ENCODE measurements at regions of chr17 and their contacts with region 1.

Region 1: DNA sequence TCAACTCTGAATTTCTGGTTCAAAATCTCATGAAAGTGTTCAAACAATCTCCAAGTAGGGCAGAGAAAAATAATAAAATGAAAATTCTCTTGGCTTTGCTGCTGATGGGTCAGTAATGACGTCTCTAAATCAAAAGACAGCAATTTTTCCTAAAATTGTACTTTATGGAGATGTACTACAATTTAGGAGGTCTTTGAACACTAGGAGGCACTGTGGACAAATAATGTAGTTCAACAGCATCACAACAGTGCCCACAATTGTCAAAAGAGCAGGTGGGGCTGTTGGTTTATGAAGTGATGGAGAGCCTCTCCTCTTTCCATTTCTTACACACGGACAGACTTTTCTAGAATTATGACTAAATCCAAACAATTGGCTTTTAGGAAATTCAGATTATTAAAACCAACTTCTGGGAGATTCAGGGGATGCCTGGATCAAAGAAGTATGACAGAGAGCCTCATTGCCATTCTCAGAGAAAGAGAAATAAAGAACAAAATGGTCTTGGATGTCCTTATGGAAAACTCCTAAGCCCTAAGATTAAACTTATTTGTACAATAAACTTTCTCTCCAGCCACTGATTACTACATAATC is 23.8 kb downstream of the EZH1 start:
- DNase-seq: peak in 1 of 2 donors; percentile 72
- ATAC-seq: peak in 7 of 8 donors; percentile 76 to 91 (median 85)
- H3K4me3 ChIP-seq: no peak overlapping the region
- H3K27ac ChIP-seq: peak overlapping the region in 2 of 10 donors; percentile 3 to 41
- H3K4me1 ChIP-seq: peaks cover 0 to 6% (median 0%) of the 10 kb centered on the region in 9 donors
- H3K27me3 ChIP-seq: no peaks in the 10 kb centered on the region
- CTCF ChIP-seq: peak; percentile 33 to 84 (median 71)

Region 2: DNA sequence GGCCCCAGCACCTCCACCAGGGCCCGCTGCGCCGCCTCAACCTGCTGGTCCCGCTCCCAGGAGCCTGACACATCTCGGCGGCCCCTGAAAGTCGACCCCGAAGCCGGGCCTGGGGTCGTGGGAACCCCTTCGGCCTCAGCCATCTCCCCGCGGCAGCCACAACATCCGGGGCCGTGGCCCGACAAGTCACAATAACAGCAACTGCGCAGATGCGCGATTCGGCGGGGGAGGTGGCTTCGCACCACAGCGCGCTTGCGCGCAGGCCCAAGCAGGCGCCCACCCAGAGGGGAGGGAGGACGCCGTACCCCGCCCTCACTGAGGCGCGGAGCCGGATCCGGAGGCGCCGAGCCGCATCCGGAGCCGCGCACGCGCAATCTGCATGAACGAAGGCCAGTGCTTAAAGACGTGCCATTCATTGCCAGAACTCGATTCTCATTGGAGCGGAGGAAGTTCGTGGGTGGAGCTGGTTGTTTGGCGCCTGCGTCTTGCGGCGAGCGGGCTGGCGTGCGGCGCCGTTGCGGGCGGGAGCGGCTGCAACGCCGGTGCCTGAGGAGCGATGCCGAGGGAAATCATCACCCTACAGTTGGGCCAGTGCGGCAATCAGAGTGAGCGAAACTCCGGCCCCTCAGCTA is 111.8 kb before region 1 on chr17 and contains the starts of genes RETREG3 and TUBG1:
- intact Hi-C with region 1: no loop called
- DNase-seq: peak; percentile 98 to 99
- ATAC-seq: peak; percentile 96 to 99 (median 98)
- H3K4me3 ChIP-seq: peak within 1 kb of the TSS; percentile 60 to 97 (median 80)
- H3K27ac ChIP-seq: peak within 1 kb of the TSS; percentile 65 to 96 (median 91)
- H3K4me1 ChIP-seq: peaks cover 6 to 54% (median 44%) of the 10 kb centered on the region in 9 donors
- H3K27me3 ChIP-seq: no peaks in the 10 kb centered on the region
- CTCF ChIP-seq: peak in 7 of 9 donors; percentile 21 to 67 (median 35)
- total RNA-seq, gene RETREG3: 18.5 to 29.9 (median 25.2) TPM
- total RNA-seq, gene TUBG1: 28.2 to 59.8 (median 43.7) TPM

Region 3: DNA sequence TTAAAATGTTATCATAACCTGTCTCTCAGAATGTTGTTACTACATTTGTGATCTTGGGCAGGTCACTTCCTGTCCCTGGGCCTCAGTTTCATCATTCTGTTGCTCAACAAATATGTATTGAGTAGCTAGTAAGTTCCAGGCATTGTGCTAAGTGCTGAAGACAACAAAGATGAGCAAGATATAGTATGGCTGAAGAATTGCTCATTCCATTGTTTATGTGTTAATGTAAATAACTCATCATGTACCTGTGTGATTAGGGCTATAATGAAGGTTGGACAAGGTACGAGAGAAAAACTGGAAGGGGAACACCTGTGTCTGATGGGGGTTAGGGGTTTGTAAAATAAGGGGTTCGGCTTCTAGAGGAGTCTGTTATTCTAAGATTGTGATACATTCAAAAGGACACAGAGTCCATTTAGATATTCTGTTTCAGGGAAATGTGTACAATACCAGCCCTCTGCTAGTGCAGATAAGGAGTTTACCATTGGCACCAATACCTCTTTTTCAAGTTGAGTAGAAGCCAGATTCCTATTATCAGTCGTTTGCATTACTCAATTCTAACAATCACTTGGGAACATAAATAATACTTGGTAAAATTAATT is 91.6 kb before region 1 on chr17:
- intact Hi-C with region 1: no loop called
- DNase-seq: no peak
- ATAC-seq: no peak
- H3K4me3 ChIP-seq: no peak overlapping the region
- H3K27ac ChIP-seq: no peak overlapping the region
- H3K4me1 ChIP-seq: no peaks in the 10 kb centered on the region
- H3K27me3 ChIP-seq: no peaks in the 10 kb centered on the region
- CTCF ChIP-seq: no peak

Region 4: DNA sequence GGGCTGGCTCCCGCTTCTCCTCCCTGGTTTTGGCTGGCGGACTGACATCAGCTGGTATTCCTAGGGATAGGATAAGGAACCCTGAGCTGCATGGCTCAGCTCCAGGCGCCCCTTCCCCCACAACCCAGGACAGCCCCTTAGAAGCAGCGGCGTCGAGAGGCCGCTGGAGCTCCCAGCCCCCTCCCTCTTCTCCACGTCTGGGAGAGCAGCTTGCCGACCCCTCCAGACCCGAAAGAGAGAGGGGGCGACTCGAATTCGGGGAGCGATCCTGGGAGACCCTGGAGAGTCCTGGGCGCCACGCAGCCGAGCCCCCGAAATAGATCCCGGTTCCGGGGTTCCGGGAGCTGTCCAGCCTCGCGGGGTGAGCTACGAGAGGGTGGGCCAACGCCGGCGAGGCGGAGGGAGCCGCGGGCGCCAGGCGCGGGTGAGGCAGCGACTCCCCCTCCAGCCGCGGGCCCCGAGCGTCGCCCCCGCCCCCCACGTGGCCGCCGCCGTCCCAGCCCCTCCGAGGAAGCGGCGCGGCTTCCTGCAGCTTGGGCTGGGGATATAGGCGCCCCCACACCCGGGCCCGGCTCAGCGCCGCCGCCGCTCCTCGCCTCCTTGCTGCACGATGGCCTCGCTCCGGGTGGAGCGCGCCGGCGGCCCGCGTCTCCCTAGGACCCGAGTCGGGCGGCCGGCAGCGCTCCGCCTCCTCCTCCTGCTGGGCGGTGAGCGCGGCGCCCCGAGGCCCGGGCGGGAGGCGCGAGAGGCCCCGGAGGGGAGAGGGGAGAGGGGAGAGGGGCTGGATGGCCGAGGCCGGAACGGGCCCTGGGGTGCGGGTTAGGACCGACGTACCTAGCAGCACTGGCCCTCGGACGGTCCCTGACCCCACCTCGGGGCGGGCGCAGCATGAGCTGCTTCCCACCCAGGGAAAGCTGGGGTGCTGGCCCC is 39.8 kb after region 1 on chr17 and contains the start of gene RAMP2:
- intact Hi-C with region 1: loop called (anchors 1 to 10 kb)
- DNase-seq: peak; percentile 42 to 55
- ATAC-seq: peak; percentile 28 to 70 (median 55)
- H3K4me3 ChIP-seq: peak within 1 kb of the TSS; percentile 43 to 87 (median 70)
- H3K27ac ChIP-seq: peak within 1 kb of the TSS; percentile 81 to 97 (median 93)
- H3K4me1 ChIP-seq: peaks cover 5 to 57% (median 26%) of the 10 kb centered on the region in 9 donors
- H3K27me3 ChIP-seq: peaks cover 0 to 38% (median 7%) of the 10 kb centered on the region in 7 donors
- CTCF ChIP-seq: peak in 2 of 9 donors; percentile 7 to 8
- total RNA-seq, gene RAMP2: 32.1 to 54.8 (median 38.2) TPM

Region 5: DNA sequence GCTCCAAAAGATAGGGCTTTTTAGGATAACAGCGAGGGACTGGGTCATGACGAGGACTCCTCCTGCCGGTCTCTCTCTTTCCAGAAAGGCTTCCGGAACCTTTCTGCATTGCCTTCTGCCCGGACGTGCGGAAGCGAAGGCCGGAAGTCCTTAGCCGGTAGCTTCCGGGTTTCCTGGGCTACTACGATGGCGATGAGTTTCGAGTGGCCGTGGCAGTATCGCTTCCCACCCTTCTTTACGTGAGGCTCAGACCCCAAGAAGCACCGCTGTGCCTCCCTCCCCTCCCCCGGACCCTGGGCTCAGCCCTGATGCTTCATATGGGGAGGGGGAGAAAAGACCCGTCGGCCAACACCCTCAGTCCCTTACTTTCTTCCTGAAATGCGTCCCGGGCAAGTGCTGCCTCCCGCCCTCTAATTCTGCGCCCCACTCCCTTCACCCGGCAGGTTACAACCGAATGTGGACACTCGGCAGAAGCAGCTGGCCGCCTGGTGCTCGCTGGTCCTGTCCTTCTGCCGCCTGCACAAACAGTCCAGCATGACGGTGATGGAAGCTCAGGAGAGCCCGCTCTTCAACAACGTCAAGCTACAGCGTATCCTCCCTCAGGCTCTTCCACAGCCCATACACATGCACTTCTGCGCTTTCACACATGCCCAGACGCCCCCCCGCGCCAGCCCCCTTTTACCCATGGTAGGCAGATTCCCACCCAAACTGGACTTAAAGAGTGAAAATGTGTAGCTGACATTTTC is 52.4 kb after region 1 on chr17 and contains the start of gene VPS25:
- intact Hi-C with region 1: loop called in 3 of 10 experiments (anchors 2 to 10 kb)
- DNase-seq: peak; percentile 72 to 86
- ATAC-seq: peak; percentile 88 to 98 (median 97)
- H3K4me3 ChIP-seq: peak within 1 kb of the TSS; percentile 34 to 99 (median 76)
- H3K27ac ChIP-seq: peak within 1 kb of the TSS in 9 of 10 donors; percentile 38 to 94 (median 84)
- H3K4me1 ChIP-seq: peaks cover 2 to 18% (median 14%) of the 10 kb centered on the region in 9 donors
- H3K27me3 ChIP-seq: no peaks in the 10 kb centered on the region
- CTCF ChIP-seq: peak in 5 of 9 donors; percentile 14 to 56 (median 40)
- total RNA-seq, gene VPS25: 33.3 to 47.4 (median 37.3) TPM

Region 6: DNA sequence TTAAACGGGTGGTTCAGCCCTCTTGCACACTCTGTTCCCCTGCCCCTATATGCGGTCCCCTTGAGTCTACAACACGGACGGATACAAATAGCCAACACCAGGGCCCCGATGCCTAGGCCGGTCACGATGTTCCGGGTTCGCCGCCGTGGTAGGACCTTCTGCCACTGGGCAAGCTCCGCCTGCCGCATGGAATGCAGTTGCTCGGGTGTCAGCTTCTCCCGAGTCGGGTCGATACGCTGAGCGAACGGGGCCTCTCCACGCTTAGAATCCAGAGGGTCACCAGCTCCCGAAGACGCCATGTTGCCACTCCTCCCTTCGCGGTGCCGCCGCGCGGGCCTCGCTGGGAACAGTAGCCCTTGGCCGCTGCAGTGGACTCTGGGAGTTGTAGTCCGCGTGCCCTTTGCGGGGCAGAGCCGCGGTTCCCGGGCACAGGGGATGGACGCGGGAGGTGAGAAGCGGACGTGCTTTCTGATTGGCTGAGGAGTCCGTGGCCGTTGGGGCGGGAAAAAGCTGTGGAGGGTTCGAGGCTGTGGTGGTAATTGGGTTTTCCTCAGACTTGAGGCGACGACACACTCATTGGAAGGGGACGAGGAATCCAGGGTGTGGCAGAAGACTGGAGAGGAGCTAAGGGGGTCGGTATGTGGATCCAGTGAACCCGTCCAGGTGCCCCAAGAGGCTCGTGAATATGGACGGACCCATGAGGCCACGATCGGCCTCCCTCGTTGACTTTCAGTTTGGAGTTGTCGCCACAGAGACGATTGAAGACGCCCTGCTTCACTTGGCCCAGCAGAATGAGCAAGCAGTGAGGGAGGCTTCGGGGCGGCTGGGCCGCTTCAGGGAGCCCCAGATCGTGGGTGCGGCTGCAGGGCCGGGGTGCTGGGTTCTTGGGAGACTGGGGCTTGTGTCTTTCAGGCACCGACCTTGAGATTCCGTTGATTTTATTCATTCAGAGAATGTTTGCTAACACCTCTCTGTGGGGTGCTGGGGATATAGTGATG is 77.6 kb after region 1 on chr17 and contains the starts of genes CNTD1 and COA3:
- intact Hi-C with region 1: no loop called
- DNase-seq: peak; percentile 87
- ATAC-seq: peak; percentile 93 to 99 (median 98)
- H3K4me3 ChIP-seq: peak within 1 kb of the TSS; percentile 68 to 96 (median 88)
- H3K27ac ChIP-seq: peak within 1 kb of the TSS; percentile 40 to 91 (median 78)
- H3K4me1 ChIP-seq: peaks cover 0 to 23% (median 17%) of the 10 kb centered on the region in 9 donors
- H3K27me3 ChIP-seq: no peaks in the 10 kb centered on the region
- CTCF ChIP-seq: peak in 2 of 9 donors; percentile 4 to 16
- total RNA-seq, gene CNTD1: 0.11 to 0.42 (median 0.39) TPM in 3 of 10 donors, not detected in the others
- total RNA-seq, gene COA3: 56.1 to 85.7 (median 72.1) TPM

Region 7: GRCh38 chr17:42819944-42820535 is 99.0 kb after region 1 on chr17:
- intact Hi-C with region 1: loop called in 6 of 10 experiments (anchors 5 to 10 kb)
- DNase-seq: peak; percentile 23 to 40
- ATAC-seq: no peak
- H3K4me3 ChIP-seq: no peak overlapping the region
- H3K27ac ChIP-seq: no peak overlapping the region
- H3K4me1 ChIP-seq: peaks cover 5 to 28% (median 20%) of the 10 kb centered on the region in 9 donors
- H3K27me3 ChIP-seq: no peaks in the 10 kb centered on the region
- CTCF ChIP-seq: peak; percentile 28 to 78 (median 65)

Region 8: GRCh38 chr17:42928714-42929496 is 207.8 kb after region 1 on chr17:
- intact Hi-C with region 1: loop called in 5 of 10 experiments (anchors 10 kb)
- DNase-seq: peak in 1 of 2 donors; percentile 52
- ATAC-seq: peak; percentile 77 to 97 (median 95)
- H3K4me3 ChIP-seq: no peak overlapping the region
- H3K27ac ChIP-seq: peak overlapping the region in 7 of 10 donors; percentile 17 to 78 (median 45)
- H3K4me1 ChIP-seq: peaks cover 4 to 27% (median 12%) of the 10 kb centered on the region in 9 donors
- H3K27me3 ChIP-seq: no peaks in the 10 kb centered on the region
- CTCF ChIP-seq: peak; percentile 41 to 78 (median 72)

Region 9: DNA sequence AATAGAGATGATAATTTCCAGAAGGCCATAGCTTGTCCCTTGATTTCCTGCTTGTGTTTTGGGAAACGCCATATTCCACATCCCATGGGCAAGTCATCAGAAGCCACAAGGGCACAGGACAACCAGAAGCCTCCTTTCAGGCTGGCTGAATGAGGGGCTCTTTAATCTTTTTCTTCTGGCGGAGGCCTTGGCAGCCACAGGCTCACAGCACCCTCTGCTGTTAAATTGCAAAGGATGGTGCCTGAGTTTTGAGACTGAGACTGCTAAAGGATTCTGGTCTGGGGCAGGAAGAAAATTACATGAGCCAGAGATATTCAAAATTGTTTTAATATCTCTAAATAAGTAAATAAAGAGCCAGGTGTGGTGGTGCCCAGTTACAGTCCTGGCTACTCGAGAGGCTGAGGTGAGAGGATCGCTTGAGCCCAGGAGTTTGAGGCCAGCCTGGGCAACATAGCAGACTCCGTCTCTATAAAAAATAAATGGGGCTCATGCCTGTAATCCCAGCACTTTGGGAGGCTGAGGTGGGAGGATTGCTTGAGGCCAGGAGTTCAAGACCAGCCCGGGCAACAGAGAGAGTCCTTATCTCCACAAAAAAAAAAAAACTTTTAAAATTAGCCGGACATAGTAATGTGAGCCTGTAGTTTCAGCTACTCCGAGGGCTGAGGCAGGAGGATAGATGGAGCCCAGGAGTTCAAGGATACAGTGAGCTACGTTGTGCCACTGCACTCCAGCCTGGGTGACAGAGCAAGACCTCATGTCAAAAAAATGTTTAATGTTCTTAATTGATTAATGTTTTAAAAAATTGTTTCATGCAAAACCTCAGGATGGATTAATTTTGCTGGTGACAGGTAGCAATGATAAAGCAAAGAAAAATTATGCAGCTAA is 216.9 kb after region 1 on chr17:
- intact Hi-C with region 1: loop called in 6 of 10 experiments (anchors 5 to 10 kb)
- DNase-seq: peak in 1 of 2 donors; percentile 23
- ATAC-seq: peak; percentile 59 to 80 (median 76)
- H3K4me3 ChIP-seq: no peak overlapping the region
- H3K27ac ChIP-seq: no peak overlapping the region
- H3K4me1 ChIP-seq: peaks cover 0 to 3% (median 0%) of the 10 kb centered on the region in 9 donors
- H3K27me3 ChIP-seq: peaks cover 0 to 4% (median 0%) of the 10 kb centered on the region in 7 donors
- CTCF ChIP-seq: peak; percentile 41 to 80 (median 69)

Region 10: GRCh38 chr17:42944211-42944610 is 223.1 kb after region 1 on chr17:
- intact Hi-C with region 1: loop called in 6 of 10 experiments (anchors 5 to 10 kb)
- DNase-seq: no peak
- ATAC-seq: no peak
- H3K4me3 ChIP-seq: no peak overlapping the region
- H3K27ac ChIP-seq: no peak overlapping the region
- H3K4me1 ChIP-seq: peaks cover 0 to 7% (median 0%) of the 10 kb centered on the region in 9 donors
- H3K27me3 ChIP-seq: peaks cover 0 to 4% (median 0%) of the 10 kb centered on the region in 7 donors
- CTCF ChIP-seq: no peak